HCT116 (cell line): ENCODE measurements at regions of chr20 and their contacts with region 1.

Region 1: GRCh38 chr20:52060794-52061714 is 130.5 kb downstream of the ZFP64 start:
- DNase-seq: peak; percentile 12
- ATAC-seq: peak; percentile 70
- H3K4me3 ChIP-seq: no peak overlapping the region
- H3K27ac ChIP-seq: no peak overlapping the region
- H3K4me1 ChIP-seq: peaks cover 0 to 12% of the 10 kb centered on the region in 2 experiments; a peak in 1 of 4 replicates
- H3K27me3 ChIP-seq: no peaks in the 10 kb centered on the region
- CTCF ChIP-seq: peak; percentile 50 to 58 (median 57); a peak in 5 of 6 replicates
- POLR2A ChIP-seq: no peak
- RAD21 ChIP-seq: peak; percentile 89

Region 2: DNA sequence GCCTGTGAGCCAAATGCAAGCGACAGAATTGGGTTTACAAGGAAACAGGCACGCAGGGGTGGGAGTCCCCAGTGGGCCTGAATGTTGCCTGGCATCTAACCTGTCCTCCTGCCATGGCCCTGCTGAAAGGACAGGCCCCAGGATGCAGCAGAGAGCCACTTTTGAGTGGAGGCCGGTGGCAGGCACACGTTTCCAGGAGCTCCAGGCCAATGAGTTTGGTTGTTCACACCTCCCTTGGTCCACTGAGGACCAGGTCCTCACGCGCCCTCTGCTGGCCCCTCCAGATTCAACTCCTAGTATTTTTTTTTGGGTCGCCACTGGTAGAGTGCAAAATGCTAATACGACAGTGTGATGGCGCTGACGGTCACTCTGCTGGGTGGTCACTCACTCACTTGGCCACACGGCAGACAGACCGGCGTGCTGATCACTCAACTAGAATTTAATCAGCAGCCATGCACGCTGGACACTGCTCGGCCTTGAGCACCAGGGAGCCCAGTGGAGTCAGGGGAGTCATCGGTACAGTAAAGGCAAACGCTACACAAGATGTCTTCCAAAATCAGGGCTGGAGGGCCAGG is 436.8 kb before region 1 on chr20:
- CTCF ChIA-PET with region 1: interaction called, 10 read pairs
- POLR2A ChIA-PET with region 1: no interaction called
- RAD21 ChIA-PET with region 1: no interaction called
- intact Hi-C with region 1: no loop called
- DNase-seq: peak; percentile 61
- ATAC-seq: peak; percentile 90
- H3K4me3 ChIP-seq: no peak overlapping the region
- H3K27ac ChIP-seq: no peak overlapping the region
- H3K4me1 ChIP-seq: peaks cover 7 to 13% of the 10 kb centered on the region in 2 experiments
- H3K27me3 ChIP-seq: no peaks in the 10 kb centered on the region
- CTCF ChIP-seq: peak; percentile 76 to 89 (median 77)
- POLR2A ChIP-seq: no peak
- RAD21 ChIP-seq: peak; percentile 72

Region 3: DNA sequence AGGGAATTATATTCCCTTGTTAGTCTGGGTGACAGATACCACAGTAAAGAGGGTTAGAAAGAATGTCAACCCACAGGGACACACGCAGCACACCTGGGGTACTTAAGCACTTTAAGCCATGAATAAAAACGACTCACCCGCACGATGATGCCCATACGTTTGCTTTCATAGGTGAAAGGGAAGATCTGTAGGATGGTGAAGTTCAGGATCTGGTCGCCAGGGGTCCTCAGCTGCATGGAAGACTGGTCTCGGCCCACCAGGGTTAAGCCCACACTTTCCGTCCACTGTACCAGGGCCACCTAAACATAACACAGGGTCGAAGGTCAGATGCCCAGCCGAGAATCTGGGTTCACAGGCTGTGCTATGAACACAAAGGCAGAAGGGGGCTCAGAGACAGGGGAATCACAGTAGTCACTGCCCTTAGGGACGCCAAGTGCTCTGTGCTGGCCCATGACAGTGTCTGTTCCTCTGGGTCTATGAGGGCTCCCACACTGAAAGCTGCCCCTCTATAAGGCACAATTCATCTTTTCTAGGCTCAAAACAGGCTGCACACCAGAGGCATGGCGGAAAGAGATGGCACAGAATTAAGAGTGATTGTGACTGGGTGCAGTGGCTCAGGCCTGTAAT is 421.7 kb before region 1 on chr20:
- CTCF ChIA-PET with region 1: interaction called, 7 read pairs
- POLR2A ChIA-PET with region 1: no interaction called
- RAD21 ChIA-PET with region 1: no interaction called
- intact Hi-C with region 1: loop called (anchors 2 kb)
- DNase-seq: peak; percentile 52
- ATAC-seq: peak; percentile 85
- H3K4me3 ChIP-seq: peak overlapping the region in 1 of 2 experiments; percentile 26; a peak in 1 of 4 replicates
- H3K27ac ChIP-seq: no peak overlapping the region
- H3K4me1 ChIP-seq: peaks cover 10 to 49% of the 10 kb centered on the region in 2 experiments; a peak in 3 of 4 replicates
- H3K27me3 ChIP-seq: no peaks in the 10 kb centered on the region
- CTCF ChIP-seq: peak; percentile 74 to 86 (median 84); a peak in 5 of 6 replicates
- POLR2A ChIP-seq: no peak
- RAD21 ChIP-seq: peak; percentile 94

Region 4: GRCh38 chr20:51695574-51696303 is 365.3 kb before region 1 on chr20:
- CTCF ChIA-PET with region 1: interaction called, 14 read pairs
- POLR2A ChIA-PET with region 1: no interaction called
- RAD21 ChIA-PET with region 1: no interaction called
- intact Hi-C with region 1: loop called (anchors 5 kb)
- DNase-seq: no peak
- ATAC-seq: no peak
- H3K4me3 ChIP-seq: no peak overlapping the region
- H3K27ac ChIP-seq: no peak overlapping the region
- H3K4me1 ChIP-seq: peaks cover 0 to 23% of the 10 kb centered on the region in 2 experiments; a peak in 3 of 4 replicates
- H3K27me3 ChIP-seq: no peaks in the 10 kb centered on the region
- CTCF ChIP-seq: no peak
- POLR2A ChIP-seq: no peak
- RAD21 ChIP-seq: no peak

Region 5: GRCh38 chr20:51703400-51704287 is 357.4 kb before region 1 on chr20:
- CTCF ChIA-PET with region 1: interaction called, 14 read pairs
- POLR2A ChIA-PET with region 1: no interaction called
- RAD21 ChIA-PET with region 1: no interaction called
- intact Hi-C with region 1: loop called (anchors 5 kb)
- DNase-seq: no peak
- ATAC-seq: no peak
- H3K4me3 ChIP-seq: no peak overlapping the region
- H3K27ac ChIP-seq: no peak overlapping the region
- H3K4me1 ChIP-seq: peaks cover 5 to 8% of the 10 kb centered on the region in 2 experiments; a peak in 3 of 4 replicates
- H3K27me3 ChIP-seq: no peaks in the 10 kb centered on the region
- CTCF ChIP-seq: no peak
- POLR2A ChIP-seq: no peak
- RAD21 ChIP-seq: no peak

Region 6: GRCh38 chr20:51800060-51800794 is 260.8 kb before region 1 on chr20:
- CTCF ChIA-PET with region 1: interaction called, 3 read pairs
- POLR2A ChIA-PET with region 1: no interaction called
- RAD21 ChIA-PET with region 1: no interaction called
- intact Hi-C with region 1: loop called (anchors 2 kb)
- DNase-seq: peak; percentile 35
- ATAC-seq: peak; percentile 98
- H3K4me3 ChIP-seq: peak overlapping the region; percentile 42 to 57
- H3K27ac ChIP-seq: no peak overlapping the region
- H3K4me1 ChIP-seq: peaks cover 0 to 18% of the 10 kb centered on the region in 2 experiments; a peak in 2 of 4 replicates
- H3K27me3 ChIP-seq: no peaks in the 10 kb centered on the region
- CTCF ChIP-seq: peak; percentile 61 to 97 (median 95)
- POLR2A ChIP-seq: no peak
- RAD21 ChIP-seq: peak; percentile 75

Region 7: DNA sequence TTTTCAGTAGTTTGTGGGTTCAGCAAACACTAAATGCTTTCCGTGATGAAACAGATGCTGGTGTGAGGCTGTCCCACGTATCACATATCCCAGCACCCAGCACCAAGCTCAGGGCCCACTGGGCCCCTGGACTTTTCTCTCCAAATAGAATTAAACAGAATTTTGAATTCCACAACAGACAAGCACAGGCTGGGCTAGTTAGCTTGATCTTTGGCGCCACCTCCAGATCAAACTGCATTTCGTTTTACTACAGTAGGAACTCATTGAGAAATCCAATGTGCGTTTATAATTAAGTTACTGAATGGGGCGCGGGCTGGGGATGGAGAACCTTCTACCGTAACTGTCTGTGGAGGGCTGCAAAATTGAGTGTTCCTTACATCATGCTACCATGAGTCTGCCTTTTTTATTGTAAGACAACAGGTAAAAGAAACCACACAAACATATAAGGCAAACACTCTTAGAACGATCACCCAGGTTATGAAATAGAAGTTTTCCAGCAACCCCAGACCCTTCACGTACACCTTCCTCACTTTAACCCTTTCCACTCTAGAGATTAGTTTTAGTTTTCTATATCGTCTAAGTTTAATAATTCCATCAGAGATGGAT is 22.7 kb after region 1 on chr20:
- CTCF ChIA-PET with region 1: no interaction called
- POLR2A ChIA-PET with region 1: no interaction called
- RAD21 ChIA-PET with region 1: no interaction called
- intact Hi-C with region 1: no loop called
- DNase-seq: peak; percentile 54
- ATAC-seq: peak; percentile 85
- H3K4me3 ChIP-seq: no peak overlapping the region
- H3K27ac ChIP-seq: no peak overlapping the region
- H3K4me1 ChIP-seq: no peaks in the 10 kb centered on the region
- H3K27me3 ChIP-seq: no peaks in the 10 kb centered on the region
- CTCF ChIP-seq: peak; percentile 58 to 85 (median 77)
- POLR2A ChIP-seq: no peak
- RAD21 ChIP-seq: peak; percentile 95